Mammary epithelial cell (primary cell): ENCODE measurements at regions of chr3 and their contacts with region 1.

Region 1: GRCh38 chr3:20340324-20340928 is 154.4 kb upstream of the SGO1 start:
- DNase-seq: peak; percentile 56
- H3K4me3 ChIP-seq: no peak overlapping the region
- H3K27ac ChIP-seq: no peak overlapping the region
- H3K4me1 ChIP-seq: no peaks in the 10 kb centered on the region
- H3K27me3 ChIP-seq: no peaks in the 10 kb centered on the region
- CTCF ChIP-seq: peak; percentile 80 to 87

Region 2: GRCh38 chr3:20160230-20160629 is 180.2 kb before region 1 on chr3:
- CTCF ChIA-PET with region 1: no interaction called
- dilution Hi-C with region 1: no loop called
- in situ Hi-C with region 1: no loop called
- intact Hi-C with region 1: no loop called
- DNase-seq: no peak
- H3K4me3 ChIP-seq: no peak overlapping the region
- H3K27ac ChIP-seq: no peak overlapping the region
- H3K4me1 ChIP-seq: no peaks in the 10 kb centered on the region
- H3K27me3 ChIP-seq: no peaks in the 10 kb centered on the region
- CTCF ChIP-seq: no peak

Region 3: GRCh38 chr3:20225769-20226168 is 114.7 kb before region 1 on chr3:
- CTCF ChIA-PET with region 1: no interaction called
- dilution Hi-C with region 1: no loop called
- in situ Hi-C with region 1: no loop called
- intact Hi-C with region 1: loop called (anchors 1 kb)
- DNase-seq: peak; percentile 26
- H3K4me3 ChIP-seq: no peak overlapping the region
- H3K27ac ChIP-seq: no peak overlapping the region
- H3K4me1 ChIP-seq: no peaks in the 10 kb centered on the region
- H3K27me3 ChIP-seq: peaks cover 3% of the 10 kb centered on the region
- CTCF ChIP-seq: peak; percentile 49 to 53

Region 4: GRCh38 chr3:21216598-21216997 is 876.2 kb after region 1 on chr3:
- CTCF ChIA-PET with region 1: no interaction called
- dilution Hi-C with region 1: no loop called
- in situ Hi-C with region 1: no loop called
- intact Hi-C with region 1: loop called (anchors 10 kb)
- DNase-seq: peak; percentile 22
- H3K4me3 ChIP-seq: no peak overlapping the region
- H3K27ac ChIP-seq: no peak overlapping the region
- H3K4me1 ChIP-seq: no peaks in the 10 kb centered on the region
- H3K27me3 ChIP-seq: no peaks in the 10 kb centered on the region
- CTCF ChIP-seq: peak in 1 of 2 donors; percentile 49

Region 5: GRCh38 chr3:21894459-21895340 is 1554.3 kb after region 1 on chr3:
- CTCF ChIA-PET with region 1: no interaction called
- dilution Hi-C with region 1: no loop called
- in situ Hi-C with region 1: no loop called
- intact Hi-C with region 1: loop called (anchors 1 kb)
- DNase-seq: no peak
- H3K4me3 ChIP-seq: no peak overlapping the region
- H3K27ac ChIP-seq: no peak overlapping the region
- H3K4me1 ChIP-seq: no peaks in the 10 kb centered on the region
- H3K27me3 ChIP-seq: no peaks in the 10 kb centered on the region
- CTCF ChIP-seq: peak; percentile 59